AG04450 (cell line): ENCODE measurements at regions of chr2 and their contacts with region 1.

Region 1: DNA sequence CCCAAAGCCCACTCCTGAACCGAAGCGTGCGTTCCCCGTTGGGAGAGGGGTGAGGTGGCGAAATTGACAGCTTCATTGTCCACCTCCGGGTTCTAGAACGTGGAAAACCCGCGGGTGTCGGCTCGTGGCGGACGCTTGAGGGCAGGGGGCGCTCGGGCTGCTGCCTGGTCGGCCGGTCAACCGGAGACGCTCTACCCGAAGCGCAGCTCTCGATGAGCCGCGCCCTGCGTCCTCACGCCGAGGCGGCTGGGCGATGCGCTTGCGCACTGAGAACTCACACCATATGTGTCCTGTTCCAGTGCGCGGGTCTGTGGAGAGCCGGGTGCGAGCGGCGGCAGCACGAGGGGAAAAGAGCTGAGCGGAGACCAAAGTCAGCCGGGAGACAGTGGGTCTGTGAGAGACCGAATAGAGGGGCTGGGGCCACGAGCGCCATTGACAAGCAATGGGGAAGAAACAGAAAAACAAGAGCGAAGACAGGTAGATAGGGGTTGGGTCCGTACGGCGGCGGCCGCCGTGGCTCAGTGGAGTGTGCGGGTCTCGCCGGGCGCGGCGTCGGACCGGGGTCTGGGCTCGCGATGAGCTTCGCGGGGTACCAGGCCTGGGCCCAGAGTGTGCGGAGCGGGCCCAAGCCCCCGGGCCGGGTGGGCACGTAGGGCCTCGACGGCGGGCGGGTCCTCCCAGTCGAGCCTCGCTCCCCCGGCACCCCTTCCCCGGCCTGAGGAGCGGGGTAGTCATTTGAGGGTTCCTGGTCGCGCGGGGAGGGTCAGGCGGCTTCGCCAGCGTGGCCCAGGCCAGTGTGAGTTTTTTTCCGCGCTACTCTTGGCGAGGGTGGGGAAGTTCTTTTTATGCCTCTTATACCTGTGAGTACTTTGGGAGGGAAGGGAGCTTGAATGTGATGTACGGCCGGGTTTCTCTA is at the start of gene EIF5B:
- DNase-seq: peak; percentile 93
- H3K4me3 ChIP-seq: peak within 1 kb of the TSS; percentile 98
- H3K27ac ChIP-seq: peak within 1 kb of the TSS; percentile 86
- H3K27me3 ChIP-seq: no peaks in the 10 kb centered on the region
- CTCF ChIP-seq: peak; percentile 76
- polyA plus RNA-seq, gene EIF5B: 18.7 and 25.2 TPM in 2 replicates

Region 2: GRCh38 chr2:99180755-99181623 is 156.4 kb before region 1 on chr2 and contains the starts of genes MITD1 and MRPL30:
- CTCF ChIA-PET with region 1: interaction called, 21 read pairs
- POLR2A ChIA-PET with region 1: interaction called, 13 read pairs
- DNase-seq: peak; percentile 89
- H3K4me3 ChIP-seq: peak within 1 kb of the TSS; percentile 99
- H3K27ac ChIP-seq: peak within 1 kb of the TSS; percentile 58
- H3K27me3 ChIP-seq: no peaks in the 10 kb centered on the region
- CTCF ChIP-seq: no peak
- polyA plus RNA-seq, gene MITD1: 19.2 and 27.2 TPM in 2 replicates
- polyA plus RNA-seq, gene MRPL30: 29.9 and 38.3 TPM in 2 replicates

Region 3: GRCh38 chr2:99325363-99325762 is 12.0 kb before region 1 on chr2:
- CTCF ChIA-PET with region 1: interaction called, 10 read pairs
- POLR2A ChIA-PET with region 1: interaction called, 13 read pairs
- DNase-seq: no peak
- H3K4me3 ChIP-seq: no peak overlapping the region
- H3K27ac ChIP-seq: no peak overlapping the region
- H3K27me3 ChIP-seq: no peaks in the 10 kb centered on the region
- CTCF ChIP-seq: no peak

Region 4: GRCh38 chr2:99356853-99357252 is 19.5 kb after region 1 on chr2:
- CTCF ChIA-PET with region 1: interaction called, 12 read pairs
- POLR2A ChIA-PET with region 1: no interaction called
- DNase-seq: no peak
- H3K4me3 ChIP-seq: no peak overlapping the region
- H3K27ac ChIP-seq: no peak overlapping the region
- H3K27me3 ChIP-seq: no peaks in the 10 kb centered on the region
- CTCF ChIP-seq: no peak

Region 5: DNA sequence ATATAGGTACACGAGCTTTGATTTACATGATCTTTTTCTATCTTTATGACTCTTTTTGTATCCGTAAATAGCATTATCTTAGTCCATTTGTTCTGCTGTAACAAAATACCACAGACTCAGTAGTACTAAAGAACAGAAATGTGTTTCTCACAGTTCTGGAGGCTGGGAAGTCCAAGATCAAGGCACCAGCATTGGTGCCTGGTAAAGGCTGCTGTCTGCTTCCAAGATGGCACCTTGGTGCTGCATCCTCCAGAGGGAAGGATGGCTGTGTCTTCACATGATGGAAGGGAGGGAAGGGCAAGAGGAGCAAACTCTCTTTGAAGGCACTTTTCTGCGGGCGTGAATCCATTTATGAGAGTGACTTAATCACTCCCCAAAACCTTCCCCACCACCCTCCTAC is 35.8 kb after region 1 on chr2:
- CTCF ChIA-PET with region 1: no interaction called
- POLR2A ChIA-PET with region 1: no interaction called
- DNase-seq: no peak
- H3K4me3 ChIP-seq: no peak overlapping the region
- H3K27ac ChIP-seq: no peak overlapping the region
- H3K27me3 ChIP-seq: no peaks in the 10 kb centered on the region
- CTCF ChIP-seq: no peak

Region 6: GRCh38 chr2:99489761-99490622 is 152.6 kb after region 1 on chr2 and contains the start of gene REV1:
- CTCF ChIA-PET with region 1: interaction called, 18 read pairs
- POLR2A ChIA-PET with region 1: no interaction called
- DNase-seq: peak; percentile 89
- H3K4me3 ChIP-seq: peak within 1 kb of the TSS; percentile 79
- H3K27ac ChIP-seq: peak within 1 kb of the TSS; percentile 65
- H3K27me3 ChIP-seq: peaks cover 10% of the 10 kb centered on the region
- CTCF ChIP-seq: peak; percentile 59
- polyA plus RNA-seq, gene REV1: 24.2 and 26.4 TPM in 2 replicates